ENCODE measurements at regions of chr3 and their contacts with region 1.

Region 1: GRCh38 chr3:108914774-108915641 is 38.7 kb downstream of the GUCA1C start:
- DNase-seq: peak; percentile 37 to 49
- ATAC-seq: peak; percentile 94

Region 2: GRCh38 chr3:108489771-108490170 is 425.2 kb before region 1 on chr3:
- intact Hi-C with region 1: loop called in 1 of 2 experiments (anchors 10 kb)
- DNase-seq: peak in 1 of 2 donors; percentile 5
- ATAC-seq: peak; percentile 68

Region 3: DNA sequence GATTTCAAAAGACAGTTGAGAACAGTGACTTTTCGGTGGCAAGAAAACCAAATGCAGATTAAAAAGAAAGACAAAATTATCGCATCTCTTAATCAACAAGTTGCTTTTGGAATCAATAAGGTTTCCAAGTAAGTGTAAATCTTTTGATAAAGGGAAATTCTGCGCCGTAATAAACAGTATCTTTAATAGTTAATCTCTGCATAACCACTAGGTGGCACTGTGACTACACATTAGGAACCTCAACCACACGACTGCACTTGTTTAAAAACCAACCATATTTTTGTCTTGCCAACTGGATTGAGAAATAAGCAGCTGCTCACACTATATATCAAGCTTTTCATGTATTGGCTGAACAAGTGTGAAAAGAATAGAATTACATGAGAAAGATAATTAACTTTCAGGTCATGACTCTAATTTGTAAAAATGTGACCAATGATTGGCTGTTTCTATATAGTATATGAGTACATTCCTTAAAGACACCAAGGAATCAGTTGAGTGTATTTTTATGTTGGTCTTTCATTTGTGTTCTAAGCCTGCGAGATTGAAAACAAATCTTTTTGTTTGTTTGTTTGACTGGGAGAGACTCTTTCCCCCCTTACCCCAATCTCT is 252.8 kb before region 1 on chr3:
- intact Hi-C with region 1: loop called in 1 of 2 experiments (anchors 2 kb)
- DNase-seq: no peak
- ATAC-seq: peak; percentile 72